Left ventricle myocardium superior (tissue), 1 donor: ENCODE measurements at regions of chr16 and their contacts with region 1.

Region 1: GRCh38 chr16:19907161-19907992 is 22.7 kb upstream of the GPRC5B start:
- DNase-seq: peak; percentile 71
- ATAC-seq: peak; percentile 89

Region 2: DNA sequence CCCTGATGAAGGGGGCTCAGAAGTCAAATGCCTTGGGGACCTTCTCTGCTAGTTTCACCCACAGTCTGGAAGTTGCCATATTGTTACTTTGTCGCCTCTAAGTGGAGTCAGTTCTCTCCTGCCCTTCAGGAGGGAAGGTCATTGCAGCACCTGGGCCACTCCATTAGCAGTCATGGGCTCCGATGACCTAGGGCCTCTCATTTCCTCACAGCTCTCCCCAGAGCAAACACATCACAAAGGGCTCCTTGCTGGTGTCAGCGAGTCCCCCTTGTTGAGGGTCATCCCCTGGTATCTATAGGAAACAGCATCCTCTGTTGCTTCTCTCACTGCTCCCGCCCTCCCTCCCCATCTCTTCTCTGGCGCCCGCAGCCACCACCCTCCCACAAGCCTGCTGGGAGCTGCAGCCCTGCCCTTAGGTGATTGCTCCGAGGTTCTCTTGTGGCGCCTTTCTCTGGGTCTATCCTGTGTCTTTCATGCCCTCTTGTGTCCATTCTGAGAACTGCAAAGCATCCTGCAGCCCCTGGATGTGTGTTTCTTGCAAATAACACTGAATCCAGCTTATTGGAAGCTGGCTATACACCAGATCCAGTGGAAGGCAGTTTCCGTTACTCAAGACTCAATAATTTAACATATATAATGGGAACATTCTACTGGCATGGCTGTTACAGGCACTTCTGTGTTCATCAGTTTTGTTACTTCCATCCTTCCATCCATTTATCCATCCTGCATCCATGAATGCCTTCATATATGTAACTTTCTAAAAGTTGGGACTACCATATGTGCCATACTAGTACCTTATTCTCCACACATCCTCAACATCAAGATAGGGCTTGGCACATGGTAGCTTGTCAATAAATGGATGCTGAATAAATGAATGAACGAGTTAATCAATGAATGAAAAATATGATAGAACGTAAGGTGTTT is 476.0 kb after region 1 on chr16:
- intact Hi-C with region 1: loop called (anchors 5 kb)
- DNase-seq: no peak
- ATAC-seq: peak; percentile 61